ENCODE measurements at regions of chr3 and their contacts with region 1.

Region 1: GRCh38 chr3:53072653-53073552 is 27.0 kb upstream of the SFMBT1 start:
- DNase-seq: peak; percentile 58 to 80
- H3K4me3 ChIP-seq: peak overlapping the region; percentile 46; the same call in 1 of the 2 replicates
- H3K27ac ChIP-seq: no peak overlapping the region
- H3K4me1 ChIP-seq: 0 out of 2 replicates have a peak, but pooled peaks cover 3% of the 10 kb centered on the region
- H3K27me3 ChIP-seq: no peaks in the 10 kb centered on the region
- CTCF ChIP-seq: peak; percentile 86

Region 2: GRCh38 chr3:52614689-52615088 is 458.2 kb before region 1 on chr3:
- CTCF ChIA-PET with region 1: no interaction called
- POLR2A ChIA-PET with region 1: no interaction called
- intact Hi-C with region 1: no loop called
- DNase-seq: no peak
- H3K4me3 ChIP-seq: no peak overlapping the region
- H3K27ac ChIP-seq: no peak overlapping the region
- H3K4me1 ChIP-seq: no peaks in the 10 kb centered on the region
- H3K27me3 ChIP-seq: no peaks in the 10 kb centered on the region
- CTCF ChIP-seq: no peak

Region 3: GRCh38 chr3:52742418-52743041 is 330.4 kb before region 1 on chr3:
- CTCF ChIA-PET with region 1: no interaction called
- POLR2A ChIA-PET with region 1: no interaction called
- intact Hi-C with region 1: loop called (anchors 1 kb)
- DNase-seq: peak in 1 of 2 experiments; percentile 0
- H3K4me3 ChIP-seq: no peak overlapping the region
- H3K27ac ChIP-seq: no peak overlapping the region
- H3K4me1 ChIP-seq: no peaks in the 10 kb centered on the region
- H3K27me3 ChIP-seq: no peaks in the 10 kb centered on the region
- CTCF ChIP-seq: peak; percentile 64

Region 4: GRCh38 chr3:52851348-52851747 is 221.6 kb before region 1 on chr3:
- CTCF ChIA-PET with region 1: no interaction called
- POLR2A ChIA-PET with region 1: no interaction called
- intact Hi-C with region 1: loop called (anchors 1 kb)
- DNase-seq: peak; percentile 38 to 44
- H3K4me3 ChIP-seq: no peak overlapping the region
- H3K27ac ChIP-seq: no peak overlapping the region
- H3K4me1 ChIP-seq: no peaks in the 10 kb centered on the region
- H3K27me3 ChIP-seq: no peaks in the 10 kb centered on the region
- CTCF ChIP-seq: peak; percentile 73